PC-3 (cell line): ENCODE measurements at regions of chr10 and their contacts with region 1.

Region 1: GRCh38 chr10:58152673-58153263 is 114.9 kb downstream of the IPMK start:
- DNase-seq: peak; percentile 91
- ATAC-seq: peak; percentile 35
- H3K4me3 ChIP-seq: no peak overlapping the region
- H3K27ac ChIP-seq: no peak overlapping the region
- H3K4me1 ChIP-seq: peaks cover 17% of the 10 kb centered on the region
- H3K27me3 ChIP-seq: 0 out of 2 replicates have a peak, but pooled peaks cover 5% of the 10 kb centered on the region
- CTCF ChIP-seq: peak; percentile 96

Region 2: DNA sequence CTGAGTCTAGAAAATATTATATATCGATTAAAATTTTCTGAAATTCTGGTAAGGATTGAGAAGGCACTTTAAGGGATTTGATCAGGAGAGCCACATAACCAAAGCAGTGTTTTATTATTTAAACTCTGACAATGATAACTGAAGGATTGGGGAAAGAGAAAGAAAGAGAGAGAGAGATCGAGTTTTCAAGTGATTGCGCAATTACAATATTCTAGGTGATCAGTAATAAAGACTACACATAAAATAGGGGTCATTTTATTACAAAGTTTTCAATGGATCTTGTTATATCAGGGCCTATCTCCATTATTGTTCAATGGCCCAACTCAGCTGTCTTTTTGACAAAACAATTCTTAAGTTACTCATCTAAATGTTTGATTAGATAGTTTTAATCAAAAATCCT is 1250.2 kb before region 1 on chr10:
- CTCF ChIA-PET with region 1: no interaction called
- POLR2A ChIA-PET with region 1: no interaction called
- intact Hi-C with region 1: no loop called
- DNase-seq: no peak
- ATAC-seq: no peak
- H3K4me3 ChIP-seq: no peak overlapping the region
- H3K27ac ChIP-seq: no peak overlapping the region
- H3K4me1 ChIP-seq: no peaks in the 10 kb centered on the region
- H3K27me3 ChIP-seq: no peaks in the 10 kb centered on the region
- CTCF ChIP-seq: no peak

Region 3: DNA sequence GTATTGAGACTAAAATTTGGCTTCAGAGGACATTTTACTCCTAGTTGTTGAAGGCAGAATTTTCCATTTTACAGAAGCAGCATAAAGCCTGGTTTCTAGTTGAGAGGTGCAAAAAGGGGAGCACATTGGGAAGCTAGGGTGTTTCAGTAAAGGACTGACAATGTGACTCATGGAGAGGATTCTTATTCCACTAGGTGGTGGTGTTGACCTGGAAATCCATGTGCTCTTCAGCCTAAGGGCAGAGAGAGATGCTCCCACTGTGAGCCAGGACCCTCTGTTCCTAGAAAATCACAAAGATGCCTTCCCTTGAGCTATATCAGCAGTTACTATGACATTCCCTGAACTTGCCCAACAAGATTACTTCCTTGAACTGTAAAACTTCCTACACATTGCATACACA is 572.8 kb before region 1 on chr10:
- CTCF ChIA-PET with region 1: interaction called, 3 read pairs
- POLR2A ChIA-PET with region 1: no interaction called
- intact Hi-C with region 1: loop called (anchors 1 kb)
- DNase-seq: peak; percentile 78
- ATAC-seq: peak; percentile 98
- H3K4me3 ChIP-seq: no peak overlapping the region
- H3K27ac ChIP-seq: no peak overlapping the region
- H3K4me1 ChIP-seq: no peaks in the 10 kb centered on the region
- H3K27me3 ChIP-seq: no peaks in the 10 kb centered on the region
- CTCF ChIP-seq: peak; percentile 90

Region 4: DNA sequence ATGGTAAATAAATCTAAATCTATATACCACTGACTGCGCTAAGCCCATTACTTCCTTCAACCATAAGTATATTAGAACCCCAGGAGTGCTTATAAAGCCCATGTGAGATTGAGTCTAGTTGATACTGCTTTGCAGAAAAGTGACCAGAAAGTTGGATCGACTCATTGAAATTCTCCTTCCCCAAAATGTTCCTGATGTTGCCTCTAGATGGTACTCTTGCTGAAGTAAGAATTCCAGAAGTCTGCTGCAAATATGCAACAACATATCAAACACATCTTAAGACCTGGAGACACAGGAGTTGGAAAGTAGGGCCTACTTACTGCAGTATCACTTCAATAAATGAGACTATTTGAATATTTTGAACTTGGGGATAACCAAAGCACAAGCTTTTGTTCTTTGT is 435.9 kb before region 1 on chr10:
- CTCF ChIA-PET with region 1: interaction called, 4 read pairs
- POLR2A ChIA-PET with region 1: no interaction called
- intact Hi-C with region 1: loop called (anchors 1 kb)
- DNase-seq: peak; percentile 78
- ATAC-seq: peak; percentile 84
- H3K4me3 ChIP-seq: no peak overlapping the region
- H3K27ac ChIP-seq: no peak overlapping the region
- H3K4me1 ChIP-seq: no peaks in the 10 kb centered on the region
- H3K27me3 ChIP-seq: no peaks in the 10 kb centered on the region
- CTCF ChIP-seq: peak; percentile 86

Region 5: GRCh38 chr10:58023341-58024073 is 129.3 kb before region 1 on chr10:
- CTCF ChIA-PET with region 1: no interaction called
- POLR2A ChIA-PET with region 1: no interaction called
- intact Hi-C with region 1: loop called (anchors 5 kb)
- DNase-seq: peak; percentile 97
- ATAC-seq: peak; percentile 92
- H3K4me3 ChIP-seq: no peak overlapping the region
- H3K27ac ChIP-seq: peak overlapping the region; percentile 82
- H3K4me1 ChIP-seq: peaks cover 25% of the 10 kb centered on the region
- H3K27me3 ChIP-seq: no peaks in the 10 kb centered on the region
- CTCF ChIP-seq: no peak

Region 6: GRCh38 chr10:58334817-58335305 is 182.1 kb after region 1 on chr10 and contains the start of gene UBE2D1:
- CTCF ChIA-PET with region 1: no interaction called
- POLR2A ChIA-PET with region 1: interaction called, 21 read pairs
- intact Hi-C with region 1: no loop called
- DNase-seq: peak; percentile 88
- ATAC-seq: peak; percentile 96
- H3K4me3 ChIP-seq: peak within 1 kb of the TSS; percentile 75
- H3K27ac ChIP-seq: peak within 1 kb of the TSS; percentile 8
- H3K4me1 ChIP-seq: peaks cover 15% of the 10 kb centered on the region
- H3K27me3 ChIP-seq: peaks cover 11% of the 10 kb centered on the region; the same call in 1 of the 2 replicates
- CTCF ChIP-seq: 0 out of 2 replicates have a peak, but pooled peaks have one; percentile 11
- total RNA-seq, gene UBE2D1: 13.6 and 13.8 TPM in 2 replicates